ENCODE measurements at regions of chr18 and their contacts with region 1.

Region 1: GRCh38 chr18:79068937-79069791 is at the start of gene ATP9B:
- DNase-seq: peak; percentile 97 to 100 (median 99)
- ATAC-seq: peak; percentile 91
- H3K4me3 ChIP-seq: peak within 1 kb of the TSS; percentile 59
- H3K4me3 Mint-ChIP-seq: peak within 1 kb of the TSS; percentile 85 to 98 (median 94)
- H3K27ac ChIP-seq: peak within 1 kb of the TSS; percentile 98
- H3K27ac Mint-ChIP-seq: peak within 1 kb of the TSS; percentile 98 to 100 (median 99)
- H3K4me1 ChIP-seq: peaks cover 12 to 29% of the 10 kb centered on the region in 2 donors
- H3K4me1 Mint-ChIP-seq: peaks cover 28 to 63% (median 51%) of the 10 kb centered on the region in 7 donors
- H3K27me3 ChIP-seq: no peaks in the 10 kb centered on the region
- H3K27me3 Mint-ChIP-seq: peaks cover under 1 to 21% (median 5%) of the 10 kb centered on the region in 5 donors
- total RNA-seq, gene ATP9B: 36.1 to 90.5 (median 90.0) TPM

Region 2: DNA sequence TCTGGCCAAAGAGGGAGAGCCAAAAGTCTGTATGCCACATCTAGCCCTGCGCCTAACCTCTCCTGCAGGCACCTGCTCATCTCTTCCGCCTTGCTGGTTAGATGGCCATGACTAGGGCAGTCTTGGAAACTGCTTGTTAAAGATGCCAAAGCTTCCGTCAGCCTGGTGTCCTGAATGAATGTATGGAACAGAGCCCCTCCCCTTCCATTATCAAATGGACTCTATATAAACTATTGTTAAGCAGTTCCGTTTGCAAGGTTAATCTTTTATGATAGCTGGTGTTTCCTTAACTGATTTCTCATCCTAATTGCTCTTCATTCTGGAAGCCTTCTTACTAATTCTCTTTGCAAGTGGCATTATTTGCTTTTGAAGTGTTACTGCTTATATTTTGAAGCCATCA is 87.2 kb after region 1 on chr18:
- CTCF ChIA-PET with region 1: no interaction called
- POLR2A ChIA-PET with region 1: no interaction called
- intact Hi-C with region 1: loop called in 1 of 2 experiments (anchors 5 kb)
- DNase-seq: no peak
- ATAC-seq: no peak
- H3K4me3 ChIP-seq: no peak overlapping the region
- H3K4me3 Mint-ChIP-seq: no peak overlapping the region
- H3K27ac ChIP-seq: no peak overlapping the region
- H3K27ac Mint-ChIP-seq: peak overlapping the region in 1 of 9 donors; percentile 66
- H3K4me1 ChIP-seq: no peaks in the 10 kb centered on the region
- H3K4me1 Mint-ChIP-seq: peaks cover 0 to 20% (median 11%) of the 10 kb centered on the region in 7 donors
- H3K27me3 ChIP-seq: no peaks in the 10 kb centered on the region
- H3K27me3 Mint-ChIP-seq: no peaks in the 10 kb centered on the region

Region 3: DNA sequence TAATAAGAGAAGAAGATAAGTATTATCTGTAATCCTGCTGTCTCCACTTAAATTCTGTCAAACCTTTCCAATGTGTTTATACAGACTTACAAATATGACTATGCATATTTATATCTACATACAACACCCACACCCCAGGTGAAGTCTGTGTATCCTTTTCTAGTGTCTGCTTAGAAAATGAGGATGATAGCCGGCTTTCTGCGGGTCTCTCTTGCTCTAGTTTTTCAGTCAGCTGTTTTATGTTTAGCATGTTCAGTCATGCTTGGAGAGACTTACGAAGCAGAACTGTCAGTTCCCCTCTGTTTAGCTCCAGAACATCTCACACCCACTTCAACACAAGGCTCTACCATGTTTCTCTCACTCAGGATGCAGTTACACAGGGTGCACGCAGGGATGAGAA is 189.3 kb after region 1 on chr18:
- CTCF ChIA-PET with region 1: no interaction called
- POLR2A ChIA-PET with region 1: no interaction called
- intact Hi-C with region 1: no loop called
- DNase-seq: no peak
- ATAC-seq: no peak
- H3K4me3 ChIP-seq: no peak overlapping the region
- H3K4me3 Mint-ChIP-seq: no peak overlapping the region
- H3K27ac ChIP-seq: no peak overlapping the region
- H3K27ac Mint-ChIP-seq: no peak overlapping the region
- H3K4me1 ChIP-seq: no peaks in the 10 kb centered on the region
- H3K4me1 Mint-ChIP-seq: peaks cover 0 to 9% (median 0%) of the 10 kb centered on the region in 7 donors
- H3K27me3 ChIP-seq: no peaks in the 10 kb centered on the region
- H3K27me3 Mint-ChIP-seq: no peaks in the 10 kb centered on the region

Region 4: GRCh38 chr18:79400091-79400590 is 331.0 kb after region 1 on chr18:
- CTCF ChIA-PET with region 1: no interaction called
- POLR2A ChIA-PET with region 1: no interaction called
- intact Hi-C with region 1: loop called (anchors 2 kb)
- DNase-seq: peak in 8 of 9 donors; percentile 38 to 65 (median 52)
- ATAC-seq: peak; percentile 45
- H3K4me3 ChIP-seq: peak overlapping the region; percentile 52
- H3K4me3 Mint-ChIP-seq: peak overlapping the region in 2 of 10 donors; percentile 90 to 91
- H3K27ac ChIP-seq: peak overlapping the region; percentile 95
- H3K27ac Mint-ChIP-seq: no peak overlapping the region
- H3K4me1 ChIP-seq: peaks cover 22 to 43% of the 10 kb centered on the region in 2 donors
- H3K4me1 Mint-ChIP-seq: peaks cover 31 to 64% (median 52%) of the 10 kb centered on the region in 7 donors
- H3K27me3 ChIP-seq: no peaks in the 10 kb centered on the region
- H3K27me3 Mint-ChIP-seq: no peaks in the 10 kb centered on the region